Panc1 (cell line): ENCODE measurements at regions of chr13 and their contacts with region 1.

Region 1: GRCh38 chr13:38686577-38687245 is at the start of gene FREM2:
- DNase-seq: no peak
- ATAC-seq: peak; percentile 91
- H3K4me3 ChIP-seq: peak within 1 kb of the TSS; percentile 33 to 49
- H3K27ac ChIP-seq: no peak within 1 kb of the TSS
- H3K4me1 ChIP-seq: no peaks in the 10 kb centered on the region; the same call in 1 of the 2 replicates
- H3K27me3 ChIP-seq: peaks cover 7% of the 10 kb centered on the region; the same call in 1 of the 2 replicates
- CTCF ChIP-seq: no peak
- total RNA-seq, gene FREM2: 0.15 TPM

Region 2: DNA sequence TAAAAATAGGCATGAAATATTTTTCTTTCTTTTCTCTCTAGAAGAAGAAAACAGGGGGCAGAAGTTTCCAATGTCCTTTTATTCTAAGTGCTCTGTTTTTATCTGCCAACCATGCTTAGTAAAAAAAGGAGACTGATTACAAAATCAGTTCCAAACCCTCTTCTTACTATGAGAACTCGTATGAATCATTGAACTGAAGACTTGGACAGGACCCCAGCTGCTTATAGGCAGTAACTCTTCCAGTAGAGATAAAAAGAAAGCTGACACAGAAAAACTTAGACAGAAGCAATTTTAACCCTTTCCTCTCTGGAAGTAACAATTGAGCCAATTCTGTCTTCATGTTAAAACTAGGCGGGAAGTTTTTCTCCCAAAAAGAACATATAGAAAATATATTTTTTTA is 24.3 kb before region 1 on chr13:
- CTCF ChIA-PET with region 1: no interaction called
- POLR2A ChIA-PET with region 1: no interaction called
- in situ Hi-C with region 1: no loop called
- intact Hi-C with region 1: no loop called
- DNase-seq: no peak
- ATAC-seq: no peak
- H3K4me3 ChIP-seq: no peak overlapping the region
- H3K27ac ChIP-seq: no peak overlapping the region
- H3K4me1 ChIP-seq: no peaks in the 10 kb centered on the region
- H3K27me3 ChIP-seq: no peaks in the 10 kb centered on the region
- CTCF ChIP-seq: no peak

Region 3: DNA sequence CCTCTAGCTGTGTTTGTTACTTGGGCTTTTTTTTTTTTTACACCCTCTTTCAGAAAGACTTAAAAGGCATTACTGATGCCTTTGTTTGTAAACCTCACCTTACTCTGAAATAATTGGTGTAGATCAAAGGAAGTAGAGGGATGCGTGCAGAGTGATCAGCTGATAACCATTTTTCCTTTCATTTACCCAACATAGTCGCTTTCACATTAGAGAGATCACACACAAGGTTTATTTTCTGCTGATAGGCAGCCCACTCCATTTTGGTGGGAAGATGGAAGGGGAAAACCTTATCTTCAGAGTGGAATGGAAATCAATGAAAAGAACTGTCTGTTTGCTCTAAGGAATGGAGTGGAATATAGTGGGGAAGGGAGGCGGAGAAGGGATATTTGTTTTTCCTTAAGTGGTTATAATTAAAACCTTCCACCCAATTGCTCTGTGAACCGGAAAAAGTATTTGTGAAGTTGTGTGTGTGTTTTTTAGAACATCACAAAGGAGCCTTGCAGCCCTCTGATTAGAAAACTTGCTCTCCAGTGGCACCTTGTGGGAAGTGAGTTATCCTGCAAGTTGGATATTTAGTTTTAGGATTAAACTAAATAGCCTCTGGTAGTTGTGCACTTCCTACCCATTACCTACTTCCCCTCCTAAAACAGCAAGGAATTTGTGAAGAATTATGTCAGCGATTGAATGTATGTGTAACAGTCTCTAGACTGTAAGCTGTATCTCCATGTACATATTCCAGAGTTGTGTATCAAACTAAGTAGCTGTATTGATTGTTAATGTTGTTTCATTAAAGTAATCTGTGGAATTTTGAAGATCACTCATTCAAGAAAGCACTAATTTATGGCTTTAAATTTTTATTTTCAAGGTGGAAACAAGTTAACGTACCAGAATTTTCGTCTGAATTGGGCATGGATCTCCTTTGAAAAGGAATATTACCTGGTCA is 77.0 kb after region 1 on chr13:
- CTCF ChIA-PET with region 1: no interaction called
- POLR2A ChIA-PET with region 1: no interaction called
- in situ Hi-C with region 1: no loop called
- intact Hi-C with region 1: loop called (anchors 2 kb)
- DNase-seq: no peak
- ATAC-seq: no peak
- H3K4me3 ChIP-seq: no peak overlapping the region
- H3K27ac ChIP-seq: no peak overlapping the region
- H3K4me1 ChIP-seq: no peaks in the 10 kb centered on the region
- H3K27me3 ChIP-seq: no peaks in the 10 kb centered on the region
- CTCF ChIP-seq: peak; percentile 51; the same call in 1 of the 2 replicates

Region 4: GRCh38 chr13:38914070-38914469 is 227.4 kb after region 1 on chr13:
- CTCF ChIA-PET with region 1: interaction called, 4 read pairs
- POLR2A ChIA-PET with region 1: no interaction called
- in situ Hi-C with region 1: no loop called
- intact Hi-C with region 1: loop called (anchors 10 kb)
- DNase-seq: no peak
- ATAC-seq: no peak
- H3K4me3 ChIP-seq: peak overlapping the region in 1 of 2 experiments; percentile 9; a peak in 1 of 4 replicates
- H3K27ac ChIP-seq: no peak overlapping the region
- H3K4me1 ChIP-seq: no peaks in the 10 kb centered on the region
- H3K27me3 ChIP-seq: no peaks in the 10 kb centered on the region
- CTCF ChIP-seq: no peak